Activated T-helper 1 cell treated with anti-CD3 and anti-CD28 coated beads, Interleukin-12 subunit alpha, Interleukin-12 subunit beta, Interleukin-2, Interleukin-4 antibody, amounts not matched to agents 30 ng/mL and 10 ng/mL and 1 ng/mL, durations not matched to agents 14 hours and 24 hours and 36 hours (primary cell): ENCODE measurements at regions of chrX and their contacts with region 1.

Region 1: DNA sequence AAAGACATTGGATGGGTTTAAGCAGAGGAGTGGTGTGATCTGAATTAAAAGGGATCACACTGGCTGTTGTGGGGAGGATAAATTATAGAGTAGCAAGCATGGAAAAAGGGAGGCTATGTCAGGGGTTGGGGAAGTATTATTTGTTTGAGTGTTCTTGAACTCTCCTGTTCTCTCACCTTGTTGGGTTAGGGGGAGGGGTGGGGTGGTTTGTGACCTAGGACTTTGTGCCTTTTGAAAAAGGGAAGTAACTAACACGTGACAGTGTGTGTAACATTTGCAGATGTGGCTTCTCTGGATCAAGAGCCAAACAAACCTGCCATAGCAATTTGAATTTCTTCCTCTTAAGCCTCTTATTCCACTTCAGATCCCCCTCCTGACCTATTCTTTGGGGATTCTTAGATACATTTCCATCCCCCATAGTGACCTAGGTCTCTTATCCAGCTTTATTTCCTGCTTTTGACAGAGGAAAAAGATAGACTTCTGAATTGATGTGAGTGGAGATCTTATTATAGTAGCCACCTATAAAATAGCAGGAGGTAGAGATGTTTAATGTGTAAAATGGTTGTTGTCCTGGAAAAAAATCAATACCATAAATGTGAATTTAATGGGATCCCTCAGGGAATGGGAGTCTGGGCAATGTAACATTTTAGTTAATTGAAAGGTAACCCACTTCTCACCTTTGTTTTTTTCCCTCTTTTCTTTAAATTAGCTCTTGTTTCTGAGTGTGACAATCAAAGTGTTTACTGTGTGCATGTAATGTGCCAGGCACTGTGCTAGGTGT is 120.4 kb downstream of the CT47B1 start:
- DNase-seq: no peak
- H3K4me3 Mint-ChIP-seq: no peak overlapping the region
- H3K27ac Mint-ChIP-seq: peak overlapping the region; percentile 65
- H3K4me1 Mint-ChIP-seq: peaks cover 51% of the 10 kb centered on the region
- H3K27me3 Mint-ChIP-seq: no peaks in the 10 kb centered on the region

Region 2: GRCh38 chrX:120560842-120561633 is 194.2 kb before region 1 on chrX and contains the start of gene CUL4B:
- intact Hi-C with region 1: loop called (anchors 5 kb)
- DNase-seq: peak; percentile 89
- H3K4me3 Mint-ChIP-seq: peak within 1 kb of the TSS; percentile 99
- H3K27ac Mint-ChIP-seq: peak within 1 kb of the TSS; percentile 97
- H3K4me1 Mint-ChIP-seq: peaks cover 30% of the 10 kb centered on the region
- H3K27me3 Mint-ChIP-seq: no peaks in the 10 kb centered on the region
- total RNA-seq, gene CUL4B: 25.2 and 26.5 TPM in 2 replicates

Region 3: DNA sequence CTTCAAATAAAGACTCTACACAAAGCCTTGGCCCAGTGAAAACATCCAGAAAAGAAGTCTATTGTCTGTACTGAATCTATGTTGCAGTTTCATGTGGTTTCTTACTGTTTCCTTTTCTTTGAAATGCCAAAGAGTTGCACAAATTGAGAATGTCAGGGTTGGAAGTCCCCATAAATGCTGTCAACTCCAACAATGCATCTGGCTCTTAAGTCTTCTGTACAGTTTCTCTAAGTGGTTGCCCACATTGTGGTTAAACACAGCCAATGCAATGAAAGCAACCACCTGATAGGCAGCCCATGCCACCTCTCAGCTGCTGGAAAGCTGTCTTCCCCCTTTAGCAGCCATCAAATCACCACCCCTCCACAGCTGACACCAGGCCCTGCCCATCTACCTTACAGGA is 58.2 kb before region 1 on chrX:
- intact Hi-C with region 1: loop called (anchors 5 kb)
- DNase-seq: peak; percentile 62
- H3K4me3 Mint-ChIP-seq: peak overlapping the region; percentile 38
- H3K27ac Mint-ChIP-seq: peak overlapping the region; percentile 93
- H3K4me1 Mint-ChIP-seq: peaks cover 21% of the 10 kb centered on the region
- H3K27me3 Mint-ChIP-seq: no peaks in the 10 kb centered on the region

Region 4: DNA sequence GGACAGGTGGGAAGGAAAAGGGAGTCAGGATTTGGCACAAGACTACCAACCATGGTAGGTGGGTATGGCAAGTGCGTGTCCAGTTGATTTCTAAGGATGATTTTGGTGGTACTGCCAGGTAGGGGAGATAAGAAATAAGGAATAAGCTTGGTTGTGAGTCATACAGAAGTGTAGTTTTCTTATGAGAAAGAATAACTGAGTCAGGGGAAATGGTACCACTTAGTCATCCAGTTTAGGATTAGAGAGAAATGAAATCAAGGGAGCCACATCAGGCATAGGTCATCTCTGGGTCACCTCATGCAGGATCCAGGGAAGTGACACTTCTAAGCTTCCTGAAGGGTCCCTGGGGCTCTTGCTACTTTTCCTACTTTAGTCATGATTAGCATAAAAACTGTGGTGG is 18.3 kb before region 1 on chrX:
- intact Hi-C with region 1: loop called (anchors 2 kb)
- DNase-seq: no peak
- H3K4me3 Mint-ChIP-seq: no peak overlapping the region
- H3K27ac Mint-ChIP-seq: no peak overlapping the region
- H3K4me1 Mint-ChIP-seq: peaks cover 21% of the 10 kb centered on the region
- H3K27me3 Mint-ChIP-seq: no peaks in the 10 kb centered on the region